ENCODE measurements at regions of chr19 and their contacts with region 1.

Region 1: DNA sequence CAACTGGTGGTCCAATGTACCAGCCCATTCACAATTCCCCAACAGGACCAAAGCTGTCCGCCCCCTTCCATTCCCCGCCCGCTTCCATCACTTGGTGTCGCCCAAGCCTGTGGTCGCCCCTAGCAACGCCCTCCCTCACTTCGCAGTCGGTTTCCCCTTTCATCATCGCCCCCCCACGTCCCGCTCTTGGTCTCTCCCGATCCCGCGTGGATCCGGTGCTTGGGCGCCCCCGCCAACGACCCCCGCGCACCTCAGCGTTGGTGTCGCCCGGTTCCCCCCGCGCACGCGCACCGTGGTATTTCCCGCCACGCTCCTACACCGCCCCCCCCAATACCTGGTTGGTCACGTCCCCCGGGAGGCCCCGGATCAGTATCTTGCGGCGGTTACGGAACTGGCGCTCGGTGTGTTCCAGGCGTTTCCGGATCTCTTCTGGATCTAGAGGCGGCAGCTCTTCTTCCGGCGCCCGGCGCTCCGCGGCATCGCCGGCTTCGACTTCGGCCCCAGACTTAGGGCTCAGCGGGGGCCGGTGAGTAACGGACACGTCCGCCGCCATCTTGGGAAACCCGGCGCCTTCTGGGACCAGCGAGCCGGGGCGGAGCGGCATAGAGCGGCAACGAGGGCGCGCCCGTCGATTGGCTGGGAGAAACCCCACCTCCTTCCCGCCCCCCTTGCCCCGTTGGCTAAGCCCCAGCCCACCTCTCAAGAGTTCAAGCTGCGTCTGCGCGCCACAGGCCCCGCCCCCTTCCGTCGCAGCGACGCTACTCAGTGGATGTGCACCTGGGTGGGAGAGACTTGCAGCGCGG is at the start of gene RAVER1:
- DNase-seq: peak; percentile 96
- H3K4me3 ChIP-seq: peak within 1 kb of the TSS; percentile 79
- H3K4me3 Mint-ChIP-seq: peak within 1 kb of the TSS; percentile 85
- H3K27ac Mint-ChIP-seq: peak within 1 kb of the TSS; percentile 81
- H3K4me1 ChIP-seq: peaks cover 6% of the 10 kb centered on the region; the same call in 1 of the 2 replicates
- H3K4me1 Mint-ChIP-seq: peaks cover 5% of the 10 kb centered on the region
- H3K27me3 ChIP-seq: no peaks in the 10 kb centered on the region
- H3K27me3 Mint-ChIP-seq: no peaks in the 10 kb centered on the region
- CTCF ChIP-seq: no peak
- total RNA-seq, gene RAVER1: 53.9 and 55.1 TPM in 2 replicates

Region 2: GRCh38 chr19:10289167-10289835 is 43.9 kb before region 1 on chr19:
- CTCF ChIA-PET with region 1: interaction called, 4 read pairs
- POLR2A ChIA-PET with region 1: interaction called, 17 read pairs
- intact Hi-C with region 1: loop called (anchors 5 kb)
- DNase-seq: peak; percentile 61 to 78
- H3K4me3 ChIP-seq: peak overlapping the region; percentile 48
- H3K4me3 Mint-ChIP-seq: peak overlapping the region; percentile 87
- H3K27ac Mint-ChIP-seq: peak overlapping the region; percentile 77
- H3K4me1 ChIP-seq: peaks cover 33% of the 10 kb centered on the region
- H3K4me1 Mint-ChIP-seq: peaks cover 24% of the 10 kb centered on the region
- H3K27me3 ChIP-seq: no peaks in the 10 kb centered on the region
- H3K27me3 Mint-ChIP-seq: peaks cover 7% of the 10 kb centered on the region
- CTCF ChIP-seq: no peak

Region 3: GRCh38 chr19:10380313-10381102 is 47.4 kb after region 1 on chr19 and contains the start of gene TYK2:
- CTCF ChIA-PET with region 1: no interaction called
- POLR2A ChIA-PET with region 1: interaction called, 6 read pairs
- intact Hi-C with region 1: loop called (anchors 1 kb)
- DNase-seq: peak; percentile 97 to 98
- H3K4me3 ChIP-seq: peak within 1 kb of the TSS; percentile 96
- H3K4me3 Mint-ChIP-seq: peak within 1 kb of the TSS; percentile 85
- H3K27ac Mint-ChIP-seq: peak within 1 kb of the TSS; percentile 95
- H3K4me1 ChIP-seq: peaks cover 8% of the 10 kb centered on the region
- H3K4me1 Mint-ChIP-seq: peaks cover 8% of the 10 kb centered on the region
- H3K27me3 ChIP-seq: no peaks in the 10 kb centered on the region
- H3K27me3 Mint-ChIP-seq: no peaks in the 10 kb centered on the region
- CTCF ChIP-seq: no peak
- total RNA-seq, gene TYK2: 124 and 134 TPM in 2 replicates

Region 4: DNA sequence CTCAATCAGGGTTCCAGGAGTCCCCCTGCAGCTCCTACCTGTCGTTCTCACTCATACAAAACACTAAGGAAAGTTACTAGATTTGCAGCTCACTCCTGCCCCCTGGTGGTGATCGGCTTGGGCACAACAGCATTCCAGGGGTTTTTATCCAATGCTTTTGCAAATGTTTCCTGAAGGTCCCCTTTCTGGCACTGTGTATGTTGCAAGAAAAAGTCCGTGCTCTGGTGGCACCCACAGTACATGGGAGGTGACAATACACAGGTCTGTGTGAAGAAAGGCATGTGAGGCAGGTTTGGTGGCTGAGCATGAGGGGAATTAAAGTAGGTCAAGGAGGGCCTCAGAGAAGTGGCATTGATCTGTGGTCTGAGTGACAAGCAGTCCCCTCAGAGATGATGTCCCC is 55.8 kb after region 1 on chr19:
- CTCF ChIA-PET with region 1: interaction called, 19 read pairs
- POLR2A ChIA-PET with region 1: no interaction called
- intact Hi-C with region 1: no loop called
- DNase-seq: peak; percentile 82 to 87
- H3K4me3 ChIP-seq: no peak overlapping the region
- H3K4me3 Mint-ChIP-seq: no peak overlapping the region
- H3K27ac Mint-ChIP-seq: peak overlapping the region; percentile 49
- H3K4me1 ChIP-seq: no peaks in the 10 kb centered on the region
- H3K4me1 Mint-ChIP-seq: no peaks in the 10 kb centered on the region
- H3K27me3 ChIP-seq: no peaks in the 10 kb centered on the region
- H3K27me3 Mint-ChIP-seq: no peaks in the 10 kb centered on the region
- CTCF ChIP-seq: peak; percentile 87 to 90